ENCODE measurements at regions of chr10 and their contacts with region 1.

Region 1: GRCh38 chr10:96129387-96130325 is at the start of gene ZNF518A:
- DNase-seq: peak; percentile 91 to 95
- ATAC-seq: peak; percentile 96 to 99 (median 98)
- H3K4me3 ChIP-seq: peak within 1 kb of the TSS; percentile 62 to 84 (median 76)
- H3K27ac ChIP-seq: peak within 1 kb of the TSS; percentile 84 to 100 (median 97)
- H3K4me1 ChIP-seq: peaks cover 0 to 25% (median 13%) of the 10 kb centered on the region in 9 donors
- H3K27me3 ChIP-seq: peaks cover 0 to 47% (median 42%) of the 10 kb centered on the region in 7 donors
- CTCF ChIP-seq: no peak
- total RNA-seq, gene ZNF518A: 11.0 to 15.0 (median 12.7) TPM

Region 2: GRCh38 chr10:95814011-95814727 is 315.5 kb before region 1 on chr10:
- intact Hi-C with region 1: no loop called
- DNase-seq: peak in 1 of 2 donors; percentile 58
- ATAC-seq: peak in 7 of 8 donors; percentile 76 to 92 (median 85)
- H3K4me3 ChIP-seq: no peak overlapping the region
- H3K27ac ChIP-seq: peak overlapping the region in 6 of 10 donors; percentile 32 to 68 (median 52)
- H3K4me1 ChIP-seq: peaks cover 0 to 44% (median 27%) of the 10 kb centered on the region in 9 donors
- H3K27me3 ChIP-seq: no peaks in the 10 kb centered on the region
- CTCF ChIP-seq: no peak

Region 3: DNA sequence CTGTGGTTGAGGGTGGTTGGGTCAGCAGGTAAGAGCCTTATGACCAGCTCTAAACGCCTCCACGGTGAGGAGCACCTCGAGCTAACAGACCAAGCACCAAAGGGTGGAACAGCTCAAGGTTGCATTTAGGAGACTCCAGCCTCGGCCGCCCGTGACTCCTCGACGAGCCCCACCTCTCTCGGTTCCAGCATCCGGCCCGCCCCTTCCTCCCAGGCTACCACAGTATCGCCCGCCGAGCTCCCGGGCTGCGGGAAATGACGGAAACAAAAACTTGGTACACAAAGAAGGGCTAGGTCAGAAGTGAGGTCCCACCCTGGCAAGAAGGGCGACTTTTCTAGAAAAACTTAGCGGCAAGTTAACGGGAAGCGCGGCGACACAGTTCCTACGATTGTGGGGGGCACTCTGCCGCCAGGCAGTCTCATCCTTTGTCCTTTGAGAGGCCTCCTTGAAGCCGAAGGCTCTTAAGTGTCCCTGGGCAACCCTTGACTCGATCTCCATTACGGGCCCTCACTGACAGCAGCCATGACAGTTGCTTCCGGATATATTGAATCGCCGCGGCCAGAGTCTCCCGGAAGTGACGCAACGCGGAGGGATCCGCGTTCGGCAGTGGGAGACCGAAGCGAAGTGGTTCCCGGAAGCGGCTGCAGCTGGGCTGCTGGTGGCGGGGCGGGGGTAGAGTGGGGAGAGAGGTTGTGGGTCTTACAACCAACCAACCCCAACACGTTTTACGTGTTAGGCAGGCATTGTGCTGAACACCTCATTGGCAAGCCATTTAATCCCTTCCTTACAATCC is 39.8 kb before region 1 on chr10:
- intact Hi-C with region 1: loop called (anchors 1 to 5 kb)
- DNase-seq: peak; percentile 93 to 94
- ATAC-seq: peak; percentile 97 to 100 (median 99)
- H3K4me3 ChIP-seq: peak overlapping the region; percentile 64 to 84 (median 76)
- H3K27ac ChIP-seq: peak overlapping the region; percentile 76 to 99 (median 94)
- H3K4me1 ChIP-seq: peaks cover 0 to 12% (median 5%) of the 10 kb centered on the region in 9 donors
- H3K27me3 ChIP-seq: peaks cover 0 to 36% (median 32%) of the 10 kb centered on the region in 7 donors
- CTCF ChIP-seq: no peak

Region 4: GRCh38 chr10:96453856-96454583 is 324.4 kb after region 1 on chr10:
- intact Hi-C with region 1: no loop called
- DNase-seq: no peak
- ATAC-seq: no peak
- H3K4me3 ChIP-seq: no peak overlapping the region
- H3K27ac ChIP-seq: no peak overlapping the region
- H3K4me1 ChIP-seq: peaks cover 0 to 3% (median 0%) of the 10 kb centered on the region in 9 donors
- H3K27me3 ChIP-seq: no peaks in the 10 kb centered on the region
- CTCF ChIP-seq: no peak

Measured in heart right ventricle (tissue), 16 donors.